ENCODE measurements at regions of chr15 and their contacts with region 1.

Region 1: GRCh38 chr15:52879904-52880303 is 89.8 kb upstream of the ONECUT1 start:
- DNase-seq: no peak
- H3K4me3 Mint-ChIP-seq: no peak overlapping the region
- H3K27ac Mint-ChIP-seq: no peak overlapping the region
- H3K4me1 Mint-ChIP-seq: no peaks in the 10 kb centered on the region
- H3K27me3 Mint-ChIP-seq: peaks cover 42% of the 10 kb centered on the region
- CTCF ChIP-seq: no peak

Region 2: GRCh38 chr15:54007244-54007643 is 1127.3 kb after region 1 on chr15:
- CTCF ChIA-PET with region 1: no interaction called
- intact Hi-C with region 1: loop called (anchors 5 kb)
- DNase-seq: no peak
- H3K4me3 Mint-ChIP-seq: no peak overlapping the region
- H3K27ac Mint-ChIP-seq: no peak overlapping the region
- H3K4me1 Mint-ChIP-seq: no peaks in the 10 kb centered on the region
- H3K27me3 Mint-ChIP-seq: no peaks in the 10 kb centered on the region
- CTCF ChIP-seq: no peak

Measured in Calu3 (cell line).